Transverse colon (tissue), 4 donors: ENCODE measurements at regions of chr3 and their contacts with region 1.

Region 1: DNA sequence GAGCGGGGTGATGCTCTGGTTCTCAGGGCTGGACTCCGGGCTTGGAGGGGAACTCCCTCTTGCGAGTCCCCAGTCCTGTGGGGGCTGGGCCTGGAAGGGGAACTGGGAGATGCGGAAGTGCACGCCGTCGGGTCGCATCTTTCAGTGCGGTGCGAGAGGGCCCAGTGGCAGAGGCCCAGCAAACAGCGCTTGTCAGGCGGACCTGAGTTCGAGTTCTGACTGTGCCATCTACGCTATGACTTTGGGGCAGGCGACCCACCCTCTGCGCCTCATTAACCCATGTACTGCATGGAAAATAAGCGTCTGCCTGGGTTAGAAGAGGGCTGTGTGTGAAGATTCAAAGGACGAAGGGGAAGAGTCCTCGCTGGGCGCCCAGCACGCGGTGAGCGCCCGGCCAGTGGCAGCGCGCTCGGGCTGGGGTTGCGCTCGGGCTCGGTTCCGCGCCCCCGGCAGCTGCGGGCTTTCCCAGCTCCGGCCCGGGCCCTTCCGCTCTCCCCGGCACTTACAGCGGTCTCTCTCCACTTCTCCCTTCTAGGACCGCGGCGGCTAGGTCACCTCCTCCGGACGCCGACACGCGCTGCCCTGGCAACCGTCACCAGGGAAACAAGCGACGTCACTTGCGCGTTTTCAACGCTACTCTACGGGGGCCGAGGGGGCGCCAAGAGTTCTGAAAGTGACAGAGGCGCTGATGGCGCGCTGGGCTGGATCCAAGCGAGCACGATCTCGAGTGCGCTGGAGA is at the start of gene CCDC13:
- DNase-seq: peak; percentile 93
- H3K4me3 ChIP-seq: peak within 1 kb of the TSS; percentile 26 to 53 (median 40)
- H3K27ac ChIP-seq: peak within 1 kb of the TSS; percentile 67 to 82 (median 78)
- H3K4me1 ChIP-seq: peaks cover 5 to 24% (median 13%) of the 10 kb centered on the region in 4 donors
- H3K27me3 ChIP-seq: no peaks in the 10 kb centered on the region
- CTCF ChIP-seq: no peak
- EP300 ChIP-seq: peak; percentile 11
- POLR2A ChIP-seq: peak; percentile 33
- total RNA-seq, gene CCDC13: 0.27 to 33.3 (median 13.6) TPM

Region 2: DNA sequence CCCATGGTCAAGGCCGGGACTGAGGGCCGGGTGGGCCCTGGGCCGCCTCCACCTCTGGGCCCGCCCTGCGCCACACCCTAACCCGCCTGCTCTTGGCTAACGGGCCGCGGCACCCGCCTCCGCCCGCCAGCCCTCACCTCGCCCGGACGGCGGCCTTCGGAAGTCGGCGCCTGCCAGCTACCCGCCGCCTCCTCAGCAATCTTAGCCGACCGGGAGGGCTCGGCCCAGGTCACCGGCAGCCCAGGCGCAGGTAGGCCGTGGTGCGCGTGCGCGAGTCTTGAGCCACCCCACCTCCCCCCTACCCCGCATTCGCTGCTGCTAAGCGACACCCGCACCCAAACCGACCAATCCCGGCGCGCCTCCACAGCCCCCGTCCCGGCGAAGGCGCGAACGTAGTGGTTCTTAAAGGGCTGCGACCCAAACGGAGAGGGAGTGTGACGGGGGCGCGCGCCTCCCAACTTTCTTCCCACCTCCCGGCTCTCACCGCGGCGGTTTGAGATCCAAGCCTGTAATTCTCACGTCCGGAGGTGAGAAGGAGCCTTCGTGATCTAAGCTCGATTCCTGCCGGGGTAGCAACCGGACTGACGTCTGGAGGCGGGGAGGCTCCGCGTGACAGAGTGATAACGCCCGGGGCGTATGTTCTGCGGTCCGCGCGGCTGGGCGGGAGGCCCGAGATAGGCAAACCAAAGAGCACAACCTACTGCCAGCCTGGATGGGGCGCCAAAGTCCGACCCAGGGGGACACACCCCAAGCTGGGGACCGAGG is 190.9 kb before region 1 on chr3 and contains the start of gene SEC22C:
- in situ Hi-C with region 1: loop called in 1 of 4 experiments (anchors 25 kb)
- intact Hi-C with region 1: no loop called
- DNase-seq: peak; percentile 95
- H3K4me3 ChIP-seq: peak within 1 kb of the TSS; percentile 64 to 80 (median 72)
- H3K27ac ChIP-seq: peak within 1 kb of the TSS; percentile 84 to 93 (median 90)
- H3K4me1 ChIP-seq: peaks cover 0 to 22% (median 8%) of the 10 kb centered on the region in 4 donors
- H3K27me3 ChIP-seq: no peaks in the 10 kb centered on the region
- CTCF ChIP-seq: peak in 2 of 5 experiments; percentile 23 to 31
- EP300 ChIP-seq: no peak
- POLR2A ChIP-seq: peak; percentile 78
- total RNA-seq, gene SEC22C: 22.7 to 66.3 (median 32.1) TPM

Region 3: GRCh38 chr3:43087249-43087776 is 314.5 kb after region 1 on chr3:
- in situ Hi-C with region 1: no loop called
- intact Hi-C with region 1: no loop called
- DNase-seq: no peak
- H3K4me3 ChIP-seq: no peak overlapping the region
- H3K27ac ChIP-seq: no peak overlapping the region
- H3K4me1 ChIP-seq: no peaks in the 10 kb centered on the region
- H3K27me3 ChIP-seq: no peaks in the 10 kb centered on the region
- CTCF ChIP-seq: no peak
- EP300 ChIP-seq: no peak
- POLR2A ChIP-seq: no peak